Cardiac septum (tissue), 1 donor: ENCODE measurements at regions of chr7 and their contacts with region 1.

Region 1: DNA sequence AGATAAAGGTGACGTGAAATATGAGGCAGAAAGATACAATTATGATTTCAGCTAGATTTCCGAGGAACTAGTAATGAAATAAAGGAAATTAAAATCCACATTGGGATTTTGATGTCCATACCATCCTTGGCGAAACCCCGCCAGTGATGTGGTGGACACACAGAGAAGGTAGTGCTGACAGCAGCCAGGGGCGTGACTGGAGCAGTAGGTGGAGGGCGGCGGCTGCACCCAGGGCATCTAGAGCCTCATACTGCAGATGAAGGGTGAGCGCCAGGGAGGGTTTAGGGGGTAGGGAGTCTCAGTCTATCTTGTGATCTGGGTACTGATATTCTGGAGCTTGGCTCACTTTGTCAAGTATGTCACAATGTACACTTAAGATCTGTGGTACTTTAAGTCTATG is 855.5 kb upstream of the POM121L12 start:
- DNase-seq: no peak

Region 2: DNA sequence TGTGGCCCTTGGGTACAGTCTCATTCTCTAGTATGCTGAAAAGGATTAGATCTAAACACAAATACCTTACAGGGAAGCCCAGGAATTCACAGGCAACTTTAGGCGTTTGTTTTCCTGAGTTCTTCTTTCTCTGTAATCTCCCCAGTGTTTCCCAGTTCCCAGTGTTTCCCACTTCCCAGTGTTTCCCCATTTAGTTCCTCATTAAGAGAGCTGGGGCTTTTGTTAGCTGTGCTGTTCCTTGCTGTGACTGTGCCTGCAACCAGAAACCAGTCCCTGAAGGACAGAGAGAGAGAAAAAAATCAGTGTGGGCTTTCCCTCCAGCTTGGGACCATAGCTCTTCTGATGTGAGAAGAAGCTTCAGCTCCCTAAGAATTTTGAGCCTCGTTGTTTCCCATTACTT is 60.4 kb before region 1 on chr7:
- intact Hi-C with region 1: loop called (anchors 10 kb)
- DNase-seq: no peak

Region 3: DNA sequence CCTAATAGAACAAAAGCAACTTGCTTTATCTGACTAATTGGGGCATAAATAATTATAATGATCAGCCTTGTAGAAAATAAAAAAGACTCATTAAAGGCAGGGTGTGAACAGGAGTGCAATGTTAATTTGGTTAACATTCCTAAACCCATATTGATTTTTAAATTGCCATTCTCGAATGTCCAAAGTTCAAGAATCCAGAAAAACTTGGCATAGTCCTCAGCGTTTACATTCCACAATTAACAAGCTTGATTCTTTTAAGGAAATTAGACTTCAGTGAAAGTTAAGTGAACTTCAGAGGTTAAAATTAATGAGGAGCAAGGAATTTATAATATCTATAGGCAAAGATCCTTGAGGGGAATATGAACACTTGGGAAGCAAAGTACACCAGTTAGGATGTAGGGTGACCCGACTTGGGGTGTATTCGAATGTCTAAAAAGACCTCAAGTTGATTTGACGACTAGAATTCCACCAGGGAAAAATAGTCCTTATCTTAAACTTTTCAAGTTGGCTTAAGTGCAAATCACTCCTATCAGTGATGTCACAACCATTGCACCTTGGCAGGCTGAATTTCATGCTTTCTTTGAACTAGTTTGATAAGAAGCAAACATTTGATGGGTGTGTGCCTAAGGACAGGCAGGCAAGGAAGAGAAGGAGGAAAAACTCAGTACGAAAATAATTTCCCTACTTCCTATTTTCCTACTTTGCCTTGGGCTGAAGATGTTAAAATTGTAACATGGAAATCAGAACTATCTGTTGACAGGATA is 32.9 kb before region 1 on chr7:
- intact Hi-C with region 1: no loop called
- DNase-seq: no peak

Region 4: GRCh38 chr7:52209614-52210013 is 29.7 kb after region 1 on chr7:
- intact Hi-C with region 1: no loop called
- DNase-seq: no peak

Region 5: DNA sequence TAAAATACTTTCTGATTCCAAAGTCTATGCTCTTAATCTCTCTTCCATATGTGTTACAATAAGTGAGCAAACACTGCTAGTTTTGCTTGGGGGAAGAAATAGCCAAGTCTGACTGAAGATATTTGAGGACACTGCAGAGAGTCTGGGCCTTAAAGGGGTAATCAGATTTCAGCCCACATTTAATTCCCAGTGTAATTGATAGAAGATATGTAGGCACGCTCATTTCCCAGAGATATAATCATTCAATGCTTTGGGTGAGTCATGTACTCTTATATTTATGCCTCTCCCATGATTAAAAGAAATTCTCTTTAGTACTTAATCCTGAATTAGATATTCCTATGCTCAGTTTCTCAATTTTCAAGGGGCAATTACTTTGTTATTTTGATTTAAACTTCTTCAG is 677.4 kb after region 1 on chr7:
- intact Hi-C with region 1: no loop called
- DNase-seq: no peak